CD8-positive, alpha-beta T cell (primary cell): ENCODE measurements at regions of chr20 and their contacts with region 1.

Region 1: DNA sequence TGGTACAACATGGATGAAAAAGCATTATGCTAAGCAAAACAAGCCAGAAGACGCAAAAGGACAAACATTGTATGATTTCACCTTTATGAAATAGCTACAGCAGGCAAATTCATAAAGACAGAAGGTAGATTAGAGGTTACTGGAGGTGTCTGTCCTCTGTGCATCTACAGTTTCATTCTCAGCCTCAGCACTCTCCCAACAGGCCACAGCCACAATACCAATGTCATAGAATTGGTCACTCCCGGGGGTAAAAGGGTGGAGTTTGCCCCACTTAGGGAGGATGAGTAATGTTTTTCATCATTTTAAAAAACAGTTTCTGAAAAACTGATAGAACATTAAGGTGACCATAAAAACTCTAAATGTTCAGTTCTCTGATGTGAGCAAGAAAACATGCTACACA is 17.2 kb upstream of the TMX4 start:
- DNase-seq: no peak
- ATAC-seq: no peak
- H3K4me3 ChIP-seq: no peak overlapping the region
- H3K4me3 Mint-ChIP-seq: no peak overlapping the region
- H3K27ac ChIP-seq: no peak overlapping the region
- H3K27ac Mint-ChIP-seq: no peak overlapping the region
- H3K4me1 ChIP-seq: no peaks in the 10 kb centered on the region
- H3K4me1 Mint-ChIP-seq: no peaks in the 10 kb centered on the region
- H3K27me3 ChIP-seq: no peaks in the 10 kb centered on the region
- H3K27me3 Mint-ChIP-seq: no peaks in the 10 kb centered on the region
- CTCF ChIP-seq: no peak

Region 2: GRCh38 chr20:8019246-8019997 is 17.3 kb before region 1 on chr20 and contains the start of gene TMX4:
- CTCF ChIA-PET with region 1: no interaction called
- POLR2A ChIA-PET with region 1: no interaction called
- intact Hi-C with region 1: loop called in 1 of 2 experiments (anchors 2 kb)
- DNase-seq: peak; percentile 72 to 94 (median 88)
- ATAC-seq: peak; percentile 78
- H3K4me3 ChIP-seq: peak within 1 kb of the TSS; percentile 49 to 68
- H3K4me3 Mint-ChIP-seq: peak within 1 kb of the TSS; percentile 94
- H3K27ac ChIP-seq: peak within 1 kb of the TSS; percentile 70 to 81
- H3K27ac Mint-ChIP-seq: peak within 1 kb of the TSS; percentile 93
- H3K4me1 ChIP-seq: peaks cover 25% of the 10 kb centered on the region
- H3K4me1 Mint-ChIP-seq: peaks cover 33% of the 10 kb centered on the region
- H3K27me3 ChIP-seq: no peaks in the 10 kb centered on the region
- H3K27me3 Mint-ChIP-seq: no peaks in the 10 kb centered on the region
- CTCF ChIP-seq: no peak
- total RNA-seq, gene TMX4: 45.6 to 47.9 TPM

Region 3: DNA sequence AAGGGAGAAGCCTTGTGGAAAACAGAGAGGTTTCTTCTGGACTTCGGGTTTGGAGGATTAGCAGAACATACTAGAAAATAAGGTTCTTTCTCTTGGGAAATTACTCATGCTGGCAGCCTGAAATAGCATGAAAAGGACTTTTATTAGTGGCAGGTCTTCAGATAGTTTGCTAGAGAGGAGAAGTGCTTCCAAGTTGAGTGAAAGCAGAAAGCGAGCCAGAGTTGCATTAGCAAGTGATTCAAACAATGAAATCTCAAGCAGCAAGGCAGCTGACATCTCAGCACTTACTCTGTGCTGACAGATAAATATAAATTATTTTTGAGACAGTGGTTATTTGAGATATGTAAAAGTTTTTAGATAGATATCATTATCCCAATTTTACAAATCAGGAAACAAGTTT is 1124.0 kb after region 1 on chr20:
- CTCF ChIA-PET with region 1: no interaction called
- POLR2A ChIA-PET with region 1: no interaction called
- intact Hi-C with region 1: no loop called
- DNase-seq: no peak
- ATAC-seq: no peak
- H3K4me3 ChIP-seq: no peak overlapping the region
- H3K4me3 Mint-ChIP-seq: peak overlapping the region; percentile 20
- H3K27ac ChIP-seq: no peak overlapping the region
- H3K27ac Mint-ChIP-seq: no peak overlapping the region
- H3K4me1 ChIP-seq: no peaks in the 10 kb centered on the region
- H3K4me1 Mint-ChIP-seq: peaks cover 4% of the 10 kb centered on the region
- H3K27me3 ChIP-seq: no peaks in the 10 kb centered on the region
- H3K27me3 Mint-ChIP-seq: no peaks in the 10 kb centered on the region
- CTCF ChIP-seq: no peak